Activated CD8-positive, alpha-beta T cell treated with anti-CD3 and anti-CD28 coated beads for 36 hours (primary cell): ENCODE measurements at regions of chr2 and their contacts with region 1.

Region 1: GRCh38 chr2:157302492-157303099 is 23.0 kb downstream of the ERMN start:
- DNase-seq: peak; percentile 33
- ATAC-seq: peak; percentile 74
- H3K4me3 Mint-ChIP-seq: no peak overlapping the region
- H3K27ac Mint-ChIP-seq: no peak overlapping the region
- H3K4me1 Mint-ChIP-seq: peaks cover 30% of the 10 kb centered on the region
- H3K27me3 Mint-ChIP-seq: no peaks in the 10 kb centered on the region
- CTCF ChIP-seq: peak; percentile 96

Region 2: DNA sequence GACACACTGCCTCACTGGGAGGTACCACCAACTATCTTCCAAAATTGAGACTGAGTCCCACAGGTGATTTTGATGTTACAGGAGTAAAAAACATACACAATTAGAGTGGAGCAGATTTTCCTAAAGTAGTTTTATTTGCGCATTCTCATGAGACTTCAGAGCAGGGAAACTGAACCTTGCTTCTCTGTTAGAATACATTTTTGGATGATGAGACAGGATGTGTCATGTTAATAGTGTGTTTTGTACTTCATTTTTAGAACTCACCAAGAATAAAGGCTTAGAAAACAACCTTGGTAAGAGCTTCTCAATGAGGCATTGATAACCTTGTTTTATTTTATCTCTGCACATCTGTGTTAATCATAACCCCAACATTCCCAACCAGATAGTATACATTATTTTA is 355.3 kb before region 1 on chr2:
- CTCF ChIA-PET with region 1: no interaction called
- POLR2A ChIA-PET with region 1: no interaction called
- intact Hi-C with region 1: no loop called
- DNase-seq: no peak
- ATAC-seq: no peak
- H3K4me3 Mint-ChIP-seq: no peak overlapping the region
- H3K27ac Mint-ChIP-seq: no peak overlapping the region
- H3K4me1 Mint-ChIP-seq: no peaks in the 10 kb centered on the region
- H3K27me3 Mint-ChIP-seq: no peaks in the 10 kb centered on the region
- CTCF ChIP-seq: no peak

Region 3: DNA sequence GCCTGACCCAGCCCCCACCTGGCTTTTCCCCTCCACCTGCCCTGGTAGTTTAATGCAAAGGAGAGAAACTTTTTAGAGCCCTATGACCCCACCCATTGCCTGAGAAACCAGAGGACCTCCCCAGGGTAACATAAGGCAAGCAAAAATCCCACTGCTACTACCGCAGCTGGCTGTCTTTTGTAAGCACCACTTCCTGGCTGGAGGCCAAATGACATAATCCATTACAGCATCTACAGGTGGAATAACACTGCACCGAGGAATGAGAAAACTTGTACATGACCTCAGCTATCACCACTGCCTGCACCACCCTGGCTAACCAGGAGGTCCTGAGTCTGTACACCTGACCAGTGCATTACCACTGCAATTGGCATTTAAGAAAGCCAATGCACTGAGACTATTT is 194.7 kb before region 1 on chr2:
- CTCF ChIA-PET with region 1: no interaction called
- POLR2A ChIA-PET with region 1: no interaction called
- intact Hi-C with region 1: no loop called
- DNase-seq: no peak
- ATAC-seq: no peak
- H3K4me3 Mint-ChIP-seq: no peak overlapping the region
- H3K27ac Mint-ChIP-seq: no peak overlapping the region
- H3K4me1 Mint-ChIP-seq: no peaks in the 10 kb centered on the region
- H3K27me3 Mint-ChIP-seq: no peaks in the 10 kb centered on the region
- CTCF ChIP-seq: no peak

Region 4: DNA sequence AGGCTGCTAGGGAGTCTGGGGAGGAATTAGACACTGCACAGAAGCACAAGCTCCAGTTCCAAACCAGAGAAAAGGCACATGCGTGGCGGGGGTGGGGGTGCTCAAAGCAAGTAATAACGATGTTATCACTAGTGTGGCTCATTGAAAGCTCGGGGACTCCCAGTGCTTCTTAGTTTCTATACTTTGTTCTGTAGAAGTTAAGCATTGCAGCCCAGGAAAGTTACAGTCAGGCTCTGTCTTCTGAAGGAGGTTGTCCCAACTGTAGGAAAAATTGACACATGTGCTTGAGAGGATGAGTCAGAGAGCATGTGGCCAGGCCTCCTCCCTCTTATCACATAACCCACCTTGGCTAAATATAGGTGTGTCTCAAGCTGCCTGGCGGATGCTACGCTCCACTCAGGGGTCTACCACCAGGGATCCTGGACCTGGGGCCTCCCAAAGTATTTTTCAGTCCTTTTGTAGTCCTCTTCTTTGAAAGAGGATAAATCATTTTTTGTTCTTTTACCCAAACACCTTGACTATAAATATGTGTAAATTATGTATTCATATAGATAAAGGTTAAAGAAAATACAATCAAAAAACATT is 41.3 kb before region 1 on chr2:
- CTCF ChIA-PET with region 1: interaction called, 12 read pairs
- POLR2A ChIA-PET with region 1: no interaction called
- intact Hi-C with region 1: no loop called
- DNase-seq: peak; percentile 85
- ATAC-seq: peak; percentile 77
- H3K4me3 Mint-ChIP-seq: peak overlapping the region; percentile 39
- H3K27ac Mint-ChIP-seq: peak overlapping the region; percentile 78
- H3K4me1 Mint-ChIP-seq: peaks cover 32% of the 10 kb centered on the region
- H3K27me3 Mint-ChIP-seq: peaks cover 12% of the 10 kb centered on the region
- CTCF ChIP-seq: no peak

Region 5: GRCh38 chr2:157312866-157313486 is 10.4 kb after region 1 on chr2:
- CTCF ChIA-PET with region 1: interaction called, 246 read pairs
- POLR2A ChIA-PET with region 1: no interaction called
- intact Hi-C with region 1: no loop called
- DNase-seq: no peak
- ATAC-seq: peak; percentile 34
- H3K4me3 Mint-ChIP-seq: no peak overlapping the region
- H3K27ac Mint-ChIP-seq: no peak overlapping the region
- H3K4me1 Mint-ChIP-seq: peaks cover 15% of the 10 kb centered on the region
- H3K27me3 Mint-ChIP-seq: no peaks in the 10 kb centered on the region
- CTCF ChIP-seq: no peak

Region 6: DNA sequence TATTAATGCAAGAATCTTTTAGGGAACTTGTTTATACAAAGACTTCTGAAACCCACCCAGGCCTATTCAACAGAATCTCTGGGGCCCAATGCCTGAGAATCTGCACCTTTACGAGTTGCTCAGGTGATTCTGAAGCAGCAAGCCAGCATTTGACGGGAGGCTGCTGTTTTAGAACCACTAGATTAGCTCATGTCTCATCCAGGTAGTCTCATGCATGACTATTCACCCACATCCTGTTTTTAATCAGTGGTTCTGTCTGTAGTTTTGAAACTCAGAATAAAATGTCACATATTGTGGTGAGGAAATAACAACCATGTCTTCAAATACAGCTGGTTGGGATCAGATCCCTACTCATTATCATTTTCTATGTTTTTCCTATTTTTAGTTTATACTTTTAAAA is 101.8 kb after region 1 on chr2:
- CTCF ChIA-PET with region 1: interaction called, 19 read pairs
- POLR2A ChIA-PET with region 1: interaction called, 5 read pairs
- intact Hi-C with region 1: no loop called
- DNase-seq: peak; percentile 78
- ATAC-seq: peak; percentile 89
- H3K4me3 Mint-ChIP-seq: peak overlapping the region; percentile 36
- H3K27ac Mint-ChIP-seq: peak overlapping the region; percentile 93
- H3K4me1 Mint-ChIP-seq: peaks cover 77% of the 10 kb centered on the region
- H3K27me3 Mint-ChIP-seq: no peaks in the 10 kb centered on the region
- CTCF ChIP-seq: no peak

Region 7: GRCh38 chr2:157492189-157492773 is 189.7 kb after region 1 on chr2:
- CTCF ChIA-PET with region 1: interaction called, 50 read pairs
- POLR2A ChIA-PET with region 1: no interaction called
- intact Hi-C with region 1: loop called (anchors 5 kb)
- DNase-seq: peak; percentile 85
- ATAC-seq: peak; percentile 86
- H3K4me3 Mint-ChIP-seq: no peak overlapping the region
- H3K27ac Mint-ChIP-seq: no peak overlapping the region
- H3K4me1 Mint-ChIP-seq: peaks cover 65% of the 10 kb centered on the region
- H3K27me3 Mint-ChIP-seq: no peaks in the 10 kb centered on the region
- CTCF ChIP-seq: peak; percentile 82

Region 8: DNA sequence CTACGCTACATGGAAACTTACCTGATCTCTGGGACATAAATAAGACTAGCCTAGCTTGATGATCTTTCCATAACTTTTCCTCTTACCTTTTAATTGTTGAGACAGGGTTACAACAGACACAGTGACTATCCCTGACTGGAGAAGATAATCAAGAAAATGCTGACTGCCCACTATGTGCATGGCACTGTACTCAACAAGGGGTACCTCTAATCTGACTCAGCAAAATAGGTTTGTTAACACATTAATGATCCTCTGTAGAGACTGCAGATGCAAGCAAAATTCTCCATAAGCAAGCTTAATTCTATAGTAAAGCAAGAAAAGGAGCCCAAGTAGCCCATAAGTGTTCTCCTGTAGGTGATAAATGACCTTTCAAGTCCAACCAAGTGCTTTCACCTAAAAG is 300.6 kb after region 1 on chr2:
- CTCF ChIA-PET with region 1: interaction called, 72 read pairs
- POLR2A ChIA-PET with region 1: no interaction called
- intact Hi-C with region 1: loop called (anchors 5 kb)
- DNase-seq: no peak
- ATAC-seq: no peak
- H3K4me3 Mint-ChIP-seq: no peak overlapping the region
- H3K27ac Mint-ChIP-seq: no peak overlapping the region
- H3K4me1 Mint-ChIP-seq: no peaks in the 10 kb centered on the region
- H3K27me3 Mint-ChIP-seq: peaks cover 2% of the 10 kb centered on the region
- CTCF ChIP-seq: no peak

Region 9: GRCh38 chr2:157771234-157771633 is 468.6 kb after region 1 on chr2:
- CTCF ChIA-PET with region 1: interaction called, 17 read pairs
- POLR2A ChIA-PET with region 1: no interaction called
- intact Hi-C with region 1: no loop called
- DNase-seq: no peak
- ATAC-seq: no peak
- H3K4me3 Mint-ChIP-seq: no peak overlapping the region
- H3K27ac Mint-ChIP-seq: no peak overlapping the region
- H3K4me1 Mint-ChIP-seq: no peaks in the 10 kb centered on the region
- H3K27me3 Mint-ChIP-seq: no peaks in the 10 kb centered on the region
- CTCF ChIP-seq: no peak